ENCODE measurements at regions of chr12 and their contacts with region 1.

Region 1: DNA sequence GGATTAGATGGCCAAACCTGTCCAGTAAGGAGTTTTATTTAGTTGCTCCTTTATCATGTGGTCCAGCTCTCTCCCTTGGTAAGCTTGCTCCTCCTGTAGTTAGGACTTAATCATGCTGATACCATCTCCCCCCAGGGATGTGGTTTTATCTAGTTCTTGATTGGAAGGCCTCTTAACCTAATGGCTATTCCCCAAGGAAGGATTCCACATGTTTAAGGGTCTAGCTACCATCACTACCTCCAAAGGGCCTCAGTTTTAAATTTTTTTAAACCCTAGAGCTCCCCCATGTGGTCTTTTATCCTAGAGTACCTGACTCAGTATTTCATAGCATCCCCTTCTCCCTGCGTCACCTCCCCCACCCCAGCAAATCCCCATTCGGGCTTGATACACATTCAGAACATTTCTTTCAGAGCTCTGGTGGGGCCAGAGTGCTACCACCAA is 22.5 kb downstream of the MAP3K12 start:
- H3K4me3 ChIP-seq: no peak overlapping the region
- H3K27ac ChIP-seq: no peak overlapping the region
- H3K4me1 ChIP-seq: no peaks in the 10 kb centered on the region
- CTCF ChIP-seq: no peak

Region 2: DNA sequence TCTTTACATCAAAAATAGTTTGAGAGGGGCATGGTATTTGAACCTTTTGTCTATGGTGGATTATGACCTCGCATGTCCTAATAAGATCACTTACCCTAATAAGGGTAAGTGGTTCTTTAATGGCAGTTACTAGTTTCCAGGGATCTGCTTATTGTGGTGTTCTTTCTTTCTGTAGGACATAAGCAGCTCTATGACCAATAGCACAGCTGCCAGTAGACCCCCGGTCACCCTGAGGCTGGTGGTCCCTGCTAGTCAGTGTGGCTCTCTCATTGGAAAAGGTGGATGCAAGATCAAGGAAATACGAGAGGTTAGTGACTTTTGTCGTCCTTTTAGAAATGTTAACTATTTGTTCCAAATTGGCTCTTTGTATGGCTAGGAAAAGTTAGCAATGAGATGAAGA is 17.7 kb before region 1 on chr12:
- CTCF ChIA-PET with region 1: interaction called, 17 read pairs
- POLR2A ChIA-PET with region 1: interaction called, 23 read pairs
- H3K4me3 ChIP-seq: no peak overlapping the region
- H3K27ac ChIP-seq: no peak overlapping the region
- H3K4me1 ChIP-seq: peaks cover 3% of the 10 kb centered on the region; the same call in 1 of the 2 replicates
- CTCF ChIP-seq: no peak

Measured in HEK293 (cell line).